ENCODE measurements at regions of chr7 and their contacts with region 1.

Region 1: GRCh38 chr7:8042796-8043535 is 74.4 kb downstream of the GLCCI1 start:
- DNase-seq: no peak
- H3K4me3 Mint-ChIP-seq: no peak overlapping the region
- H3K27ac Mint-ChIP-seq: peak overlapping the region; percentile 25
- H3K4me1 Mint-ChIP-seq: peaks cover 71% of the 10 kb centered on the region
- H3K27me3 Mint-ChIP-seq: no peaks in the 10 kb centered on the region

Region 2: GRCh38 chr7:7681179-7681935 is 361.6 kb before region 1 on chr7:
- CTCF ChIA-PET with region 1: interaction called, 5 read pairs
- POLR2A ChIA-PET with region 1: no interaction called
- intact Hi-C with region 1: loop called (anchors 2 kb)
- DNase-seq: no peak
- H3K4me3 Mint-ChIP-seq: no peak overlapping the region
- H3K27ac Mint-ChIP-seq: peak overlapping the region; percentile 52
- H3K4me1 Mint-ChIP-seq: peaks cover 30% of the 10 kb centered on the region
- H3K27me3 Mint-ChIP-seq: no peaks in the 10 kb centered on the region

Region 3: DNA sequence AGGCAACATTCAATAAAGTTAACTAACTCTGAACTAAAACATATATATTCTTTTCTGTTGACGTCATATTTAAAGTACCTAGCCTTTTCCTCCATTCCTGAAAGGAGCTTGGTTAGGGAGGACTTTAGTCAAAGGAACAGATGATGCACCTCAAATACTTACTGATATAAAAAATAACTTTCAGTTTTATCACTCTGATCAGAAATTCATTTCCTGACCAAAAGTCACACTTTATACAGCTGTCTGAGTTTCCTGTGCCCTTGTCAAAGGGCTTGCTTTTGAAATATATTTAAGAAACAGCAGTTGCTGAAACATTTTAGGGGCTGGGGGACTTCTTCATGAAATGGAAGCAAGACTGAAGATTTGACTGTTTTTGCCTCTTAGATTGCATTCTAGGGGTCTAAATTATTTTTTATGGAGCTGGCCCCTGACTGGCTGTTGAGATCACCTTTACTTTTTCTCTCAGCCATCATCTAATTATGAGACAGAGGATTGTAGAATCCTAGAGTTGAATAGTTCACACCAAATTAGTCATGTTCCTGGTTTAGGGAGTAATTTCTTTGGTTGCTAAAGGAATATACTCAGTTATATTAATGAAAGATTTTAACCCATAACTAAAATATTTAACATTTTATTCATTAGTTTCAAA is 27.7 kb before region 1 on chr7:
- CTCF ChIA-PET with region 1: no interaction called
- POLR2A ChIA-PET with region 1: no interaction called
- intact Hi-C with region 1: loop called (anchors 1 kb)
- DNase-seq: no peak
- H3K4me3 Mint-ChIP-seq: no peak overlapping the region
- H3K27ac Mint-ChIP-seq: peak overlapping the region; percentile 56
- H3K4me1 Mint-ChIP-seq: peaks cover 40% of the 10 kb centered on the region
- H3K27me3 Mint-ChIP-seq: no peaks in the 10 kb centered on the region

Region 4: GRCh38 chr7:8125680-8126444 is 82.9 kb after region 1 on chr7:
- CTCF ChIA-PET with region 1: interaction called, 4 read pairs
- POLR2A ChIA-PET with region 1: interaction called, 5 read pairs
- intact Hi-C with region 1: loop called (anchors 1 kb)
- DNase-seq: peak; percentile 89
- H3K4me3 Mint-ChIP-seq: peak overlapping the region; percentile 66
- H3K27ac Mint-ChIP-seq: peak overlapping the region; percentile 92
- H3K4me1 Mint-ChIP-seq: peaks cover 78% of the 10 kb centered on the region
- H3K27me3 Mint-ChIP-seq: no peaks in the 10 kb centered on the region

Region 5: GRCh38 chr7:8176370-8177081 is 133.6 kb after region 1 on chr7:
- CTCF ChIA-PET with region 1: no interaction called
- POLR2A ChIA-PET with region 1: no interaction called
- intact Hi-C with region 1: loop called (anchors 1 kb)
- DNase-seq: peak; percentile 75
- H3K4me3 Mint-ChIP-seq: peak overlapping the region; percentile 67
- H3K27ac Mint-ChIP-seq: peak overlapping the region; percentile 93
- H3K4me1 Mint-ChIP-seq: peaks cover 49% of the 10 kb centered on the region
- H3K27me3 Mint-ChIP-seq: no peaks in the 10 kb centered on the region